PC-3 (cell line): ENCODE measurements at regions of chr2 and their contacts with region 1.

Region 1: DNA sequence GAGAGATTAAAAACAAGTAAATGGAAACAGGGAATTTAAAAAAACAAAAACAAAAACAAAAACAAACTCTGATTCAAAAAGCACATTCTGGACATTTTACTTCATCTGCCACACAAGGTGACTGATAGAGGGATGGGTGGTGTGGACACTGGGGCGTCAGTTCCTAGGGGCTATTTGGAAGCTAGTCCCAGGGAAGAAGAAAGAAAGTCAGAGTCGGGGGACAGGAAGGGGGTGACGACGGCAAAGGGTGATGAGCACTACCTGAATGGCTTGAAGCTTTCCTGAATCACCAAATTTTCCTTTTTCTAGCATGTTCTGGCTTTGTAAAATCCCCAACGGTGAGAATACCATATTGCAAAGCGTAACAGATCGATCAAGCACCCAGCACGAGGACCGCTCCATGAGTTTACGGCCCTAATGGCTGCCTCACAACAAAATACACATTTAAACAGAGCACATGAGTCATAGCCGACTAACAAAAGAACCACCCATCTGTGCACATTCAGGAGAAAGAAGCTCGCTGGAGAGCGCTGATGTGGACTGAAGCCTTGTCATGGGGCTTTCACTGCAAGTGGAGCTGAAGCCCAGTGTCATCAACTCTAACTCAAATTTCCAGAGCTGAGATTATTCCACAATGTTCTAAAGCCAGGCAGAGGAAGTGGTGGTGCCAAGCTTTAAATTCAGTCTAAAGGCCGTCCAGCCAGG is 178.9 kb downstream of the LNPK start:
- DNase-seq: no peak
- ATAC-seq: no peak
- H3K4me3 ChIP-seq: no peak overlapping the region
- H3K27ac ChIP-seq: no peak overlapping the region
- H3K4me1 ChIP-seq: no peaks in the 10 kb centered on the region
- H3K27me3 ChIP-seq: peaks cover 66% of the 10 kb centered on the region
- CTCF ChIP-seq: no peak

Region 2: DNA sequence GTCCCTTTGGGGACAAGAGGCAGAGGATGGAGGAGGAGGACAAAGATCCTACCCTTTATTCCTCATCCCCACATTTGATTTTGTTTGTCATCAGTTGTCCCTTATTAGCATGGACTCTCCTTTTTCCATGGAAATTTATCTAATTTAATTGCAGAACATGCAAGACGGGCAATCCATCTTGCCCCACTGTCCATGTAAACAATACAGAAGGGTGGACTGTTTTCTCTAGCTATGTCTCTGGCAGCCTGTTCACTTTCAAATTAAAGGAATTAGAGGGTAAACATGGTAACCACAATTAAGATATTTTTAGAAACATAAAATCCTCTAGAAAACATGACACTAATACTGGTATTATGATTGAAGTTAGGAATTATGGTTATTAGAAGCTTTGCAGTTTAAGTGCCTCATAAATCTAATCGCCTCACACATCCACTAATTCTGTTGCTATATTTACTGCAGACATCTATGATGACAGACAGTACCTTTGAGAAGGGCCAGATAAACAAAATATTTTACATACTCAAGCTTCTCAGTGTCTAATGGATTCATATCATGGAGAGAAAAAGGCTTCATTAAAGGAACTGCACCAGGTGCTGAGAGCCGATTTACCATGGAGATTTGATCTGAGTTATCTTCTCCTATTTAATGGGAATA is 36.6 kb before region 1 on chr2:
- CTCF ChIA-PET with region 1: no interaction called
- POLR2A ChIA-PET with region 1: interaction called, 11 read pairs
- intact Hi-C with region 1: no loop called
- DNase-seq: no peak
- ATAC-seq: no peak
- H3K4me3 ChIP-seq: no peak overlapping the region
- H3K27ac ChIP-seq: no peak overlapping the region
- H3K4me1 ChIP-seq: no peaks in the 10 kb centered on the region
- H3K27me3 ChIP-seq: peaks cover 46% of the 10 kb centered on the region
- CTCF ChIP-seq: no peak